Gastrocnemius medialis (tissue), 4 donors: ENCODE measurements at regions of chr2 and their contacts with region 1.

Region 1: GRCh38 chr2:108786354-108787199 is at the start of gene CCDC138:
- DNase-seq: peak; percentile 53 to 80
- ATAC-seq: peak; percentile 91 to 97
- H3K4me3 ChIP-seq: peak within 1 kb of the TSS; percentile 63 to 90 (median 68)
- H3K27ac ChIP-seq: peak within 1 kb of the TSS; percentile 64 to 79 (median 68)
- H3K4me1 ChIP-seq: peaks cover 8 to 10% of the 10 kb centered on the region in 2 donors
- H3K27me3 ChIP-seq: no peaks in the 10 kb centered on the region
- CTCF ChIP-seq: no peak
- POLR2A ChIP-seq: peak in 1 of 2 donors; percentile 25
- total RNA-seq, gene CCDC138: 0.52 to 2.8 (median 1.2) TPM

Region 2: DNA sequence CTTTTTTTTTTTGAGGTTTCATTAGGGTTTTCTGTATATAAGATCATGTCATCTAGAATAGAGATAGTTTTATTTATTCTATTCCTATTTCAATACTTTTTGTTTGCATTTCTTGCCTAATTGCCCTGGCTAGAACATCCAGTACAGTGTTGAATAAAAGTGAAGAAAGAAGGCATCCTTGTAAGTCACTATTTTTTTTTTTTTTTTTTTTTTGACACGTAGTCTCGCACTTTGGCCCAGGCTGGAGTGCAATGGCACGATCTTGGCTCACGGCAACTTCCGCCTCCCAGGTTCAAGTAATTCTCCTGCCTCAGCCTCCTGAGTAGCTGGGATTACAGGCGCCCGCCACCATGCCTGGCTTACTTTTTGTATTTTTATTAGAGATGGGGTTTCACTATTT is 95.1 kb before region 1 on chr2:
- in situ Hi-C with region 1: loop called in 1 of 4 experiments (anchors 25 kb)
- intact Hi-C with region 1: no loop called
- DNase-seq: no peak
- ATAC-seq: no peak
- H3K4me3 ChIP-seq: no peak overlapping the region
- H3K27ac ChIP-seq: no peak overlapping the region
- H3K4me1 ChIP-seq: no peaks in the 10 kb centered on the region
- H3K27me3 ChIP-seq: no peaks in the 10 kb centered on the region
- CTCF ChIP-seq: no peak
- POLR2A ChIP-seq: no peak